Activated T-helper 1 cell treated with anti-CD3 and anti-CD28 coated beads, Interleukin-12 subunit alpha, Interleukin-12 subunit beta, Interleukin-2, Interleukin-4 antibody, amounts not matched to agents 30 ng/mL and 10 ng/mL and 1 ng/mL, durations not matched to agents 14 hours and 24 hours and 36 hours (primary cell): ENCODE measurements at regions of chr2 and their contacts with region 1.

Region 1: GRCh38 chr2:38947240-38948239 is 57.9 kb downstream of the ARHGEF33 start:
- DNase-seq: peak; percentile 38
- H3K4me3 Mint-ChIP-seq: no peak overlapping the region
- H3K27ac Mint-ChIP-seq: no peak overlapping the region
- H3K4me1 Mint-ChIP-seq: no peaks in the 10 kb centered on the region
- H3K27me3 Mint-ChIP-seq: peaks cover 6% of the 10 kb centered on the region

Region 2: DNA sequence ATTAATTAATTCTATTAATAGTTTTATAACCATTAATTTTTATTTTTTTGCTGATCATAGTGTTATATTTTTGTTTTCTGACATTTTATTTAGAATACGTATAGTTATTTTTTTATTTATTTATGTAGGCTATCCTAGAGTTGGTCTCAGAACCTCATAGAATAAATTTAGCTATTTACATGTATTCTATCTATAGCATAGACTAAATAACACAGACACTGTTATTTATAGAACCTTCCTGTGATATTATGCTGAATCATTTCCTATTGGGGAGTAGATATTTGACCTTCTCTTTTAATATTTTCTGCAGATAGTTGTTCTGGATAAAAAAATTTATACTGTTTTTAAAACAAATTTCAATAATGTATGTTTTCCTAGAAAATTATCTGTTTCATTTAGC is 37.7 kb before region 1 on chr2:
- intact Hi-C with region 1: no loop called
- DNase-seq: no peak
- H3K4me3 Mint-ChIP-seq: no peak overlapping the region
- H3K27ac Mint-ChIP-seq: no peak overlapping the region
- H3K4me1 Mint-ChIP-seq: peaks cover 17% of the 10 kb centered on the region
- H3K27me3 Mint-ChIP-seq: peaks cover 7% of the 10 kb centered on the region

Region 3: DNA sequence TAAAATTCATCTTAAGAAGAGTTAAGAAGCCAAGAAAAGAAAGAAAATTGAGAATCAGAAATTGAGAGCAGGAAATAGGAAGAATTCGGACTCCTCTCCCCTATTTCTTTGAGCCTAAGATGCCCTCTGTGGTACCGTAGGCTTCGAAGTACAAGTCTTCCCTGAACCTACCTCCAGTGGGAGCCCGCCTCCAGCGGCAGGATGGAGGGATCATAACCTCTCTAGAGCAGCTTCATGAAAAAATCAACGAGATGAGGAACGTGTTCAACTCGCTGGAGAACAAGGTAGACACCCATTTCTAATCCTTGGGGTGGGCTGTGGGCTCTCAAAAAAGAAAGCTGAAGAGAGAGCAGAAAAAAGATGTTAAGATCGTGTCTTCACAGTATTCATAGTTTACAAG is 21.6 kb before region 1 on chr2:
- intact Hi-C with region 1: no loop called
- DNase-seq: no peak
- H3K4me3 Mint-ChIP-seq: no peak overlapping the region
- H3K27ac Mint-ChIP-seq: no peak overlapping the region
- H3K4me1 Mint-ChIP-seq: no peaks in the 10 kb centered on the region
- H3K27me3 Mint-ChIP-seq: peaks cover 26% of the 10 kb centered on the region

Region 4: DNA sequence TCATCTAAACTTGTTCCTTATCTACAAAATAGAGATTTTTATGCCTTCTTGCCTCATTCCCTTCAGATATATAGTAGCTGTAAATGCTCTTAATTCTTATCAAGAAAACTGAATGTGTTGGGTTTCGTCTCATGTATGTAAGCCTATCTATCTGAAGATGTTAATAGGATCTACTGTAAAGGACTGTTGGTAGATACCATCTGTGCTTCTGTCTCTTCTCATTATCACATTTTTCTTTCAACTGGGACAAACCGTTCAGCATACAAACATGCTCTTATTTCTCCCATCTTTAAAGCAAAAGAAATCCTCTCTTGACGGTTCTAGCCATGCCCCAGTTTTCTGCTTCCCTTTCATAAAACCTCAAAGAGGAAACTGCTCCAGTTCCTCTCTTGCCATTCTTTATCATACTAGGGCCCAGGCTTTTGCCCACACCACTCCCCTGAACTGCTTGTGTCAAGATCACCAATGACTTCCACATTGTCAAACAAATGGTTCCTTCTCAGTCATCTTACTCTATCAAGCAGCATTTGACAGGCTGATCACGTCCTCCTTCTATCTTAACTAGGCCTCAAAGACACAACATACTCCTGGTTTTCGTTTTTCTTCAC is 30.9 kb after region 1 on chr2:
- intact Hi-C with region 1: no loop called
- DNase-seq: no peak
- H3K4me3 Mint-ChIP-seq: no peak overlapping the region
- H3K27ac Mint-ChIP-seq: peak overlapping the region; percentile 72
- H3K4me1 Mint-ChIP-seq: no peaks in the 10 kb centered on the region
- H3K27me3 Mint-ChIP-seq: no peaks in the 10 kb centered on the region

Region 5: GRCh38 chr2:39039072-39039471 is 91.5 kb after region 1 on chr2:
- intact Hi-C with region 1: loop called (anchors 5 kb)
- DNase-seq: no peak
- H3K4me3 Mint-ChIP-seq: no peak overlapping the region
- H3K27ac Mint-ChIP-seq: no peak overlapping the region
- H3K4me1 Mint-ChIP-seq: no peaks in the 10 kb centered on the region
- H3K27me3 Mint-ChIP-seq: no peaks in the 10 kb centered on the region

Region 6: GRCh38 chr2:39059366-39059952 is 111.9 kb after region 1 on chr2:
- intact Hi-C with region 1: loop called (anchors 1 kb)
- DNase-seq: no peak
- H3K4me3 Mint-ChIP-seq: no peak overlapping the region
- H3K27ac Mint-ChIP-seq: no peak overlapping the region
- H3K4me1 Mint-ChIP-seq: peaks cover 24% of the 10 kb centered on the region
- H3K27me3 Mint-ChIP-seq: no peaks in the 10 kb centered on the region

Region 7: DNA sequence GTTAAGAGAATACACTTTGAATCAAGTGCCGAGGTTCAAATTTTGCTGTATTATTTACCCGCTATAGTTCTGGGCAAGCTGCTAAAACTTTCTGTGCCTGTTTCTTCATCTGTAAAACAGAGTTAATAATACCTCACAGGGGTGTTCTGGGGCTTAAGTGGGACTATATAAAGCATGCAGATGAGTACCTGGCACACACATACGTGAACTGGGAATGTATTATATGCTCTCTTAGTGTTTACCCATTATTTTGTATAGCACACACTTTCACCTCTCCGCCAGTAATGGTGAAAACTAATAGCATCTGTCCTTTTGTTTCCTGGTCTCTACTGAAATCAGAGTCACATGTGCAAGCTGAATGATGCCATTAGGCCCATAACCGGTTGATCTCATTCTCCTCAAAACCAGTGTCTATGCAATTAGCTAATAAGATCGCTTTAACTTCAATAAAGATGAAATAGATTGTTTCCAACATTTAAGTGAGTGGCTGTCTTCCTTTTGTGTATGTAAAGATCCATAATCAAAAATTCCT is 300.0 kb after region 1 on chr2:
- intact Hi-C with region 1: loop called (anchors 5 kb)
- DNase-seq: no peak
- H3K4me3 Mint-ChIP-seq: no peak overlapping the region
- H3K27ac Mint-ChIP-seq: no peak overlapping the region
- H3K4me1 Mint-ChIP-seq: peaks cover 13% of the 10 kb centered on the region
- H3K27me3 Mint-ChIP-seq: no peaks in the 10 kb centered on the region